T-cell (primary cell): ENCODE measurements at regions of chr9 and their contacts with region 1.

Region 1: GRCh38 chr9:120916588-120916987 is 10.0 kb downstream of the TRAF1 start:
- DNase-seq: no peak
- ATAC-seq: no peak
- H3K4me3 ChIP-seq: no peak overlapping the region
- H3K4me3 Mint-ChIP-seq: peak overlapping the region; percentile 29 to 72 (median 55)
- H3K27ac ChIP-seq: peak overlapping the region; percentile 52
- H3K27ac Mint-ChIP-seq: peak overlapping the region; percentile 88 to 93
- H3K4me1 ChIP-seq: peaks cover 25 to 88% of the 10 kb centered on the region in 2 experiments
- H3K4me1 Mint-ChIP-seq: peaks cover 85 to 90% (median 90%) of the 10 kb centered on the region in 3 donors
- H3K27me3 ChIP-seq: no peaks in the 10 kb centered on the region
- H3K27me3 Mint-ChIP-seq: no peaks in the 10 kb centered on the region

Region 2: DNA sequence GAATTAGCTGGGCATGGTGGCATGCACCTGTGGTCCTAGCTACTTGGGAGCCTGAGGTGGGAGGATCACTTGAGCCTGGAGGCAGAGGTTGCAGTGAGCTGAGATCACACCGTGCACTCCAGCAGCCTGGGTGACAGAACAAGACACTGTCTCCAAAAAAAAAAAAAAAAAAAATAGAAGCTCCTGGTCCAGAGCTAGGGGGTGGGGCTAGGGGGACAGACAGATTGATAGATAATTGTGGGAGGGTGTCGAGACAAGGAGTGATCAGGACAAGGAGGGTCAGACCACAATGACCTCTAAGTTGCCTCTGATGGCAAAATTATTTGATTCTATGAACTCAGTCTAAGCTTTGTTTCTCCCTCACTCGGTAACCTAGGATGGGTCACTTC is 33.0 kb before region 1 on chr9:
- CTCF ChIA-PET with region 1: interaction called, 3 read pairs
- POLR2A ChIA-PET with region 1: interaction called, 8 to 11 read pairs
- DNase-seq: no peak
- ATAC-seq: no peak
- H3K4me3 ChIP-seq: no peak overlapping the region
- H3K4me3 Mint-ChIP-seq: peak overlapping the region in 1 of 3 donors; percentile 50
- H3K27ac ChIP-seq: no peak overlapping the region
- H3K27ac Mint-ChIP-seq: peak overlapping the region; percentile 44 to 88
- H3K4me1 ChIP-seq: peaks cover 29 to 58% of the 10 kb centered on the region in 2 experiments
- H3K4me1 Mint-ChIP-seq: peaks cover 77 to 79% (median 77%) of the 10 kb centered on the region in 3 donors
- H3K27me3 ChIP-seq: no peaks in the 10 kb centered on the region
- H3K27me3 Mint-ChIP-seq: no peaks in the 10 kb centered on the region

Region 3: GRCh38 chr9:120904061-120904977 is 12.3 kb before region 1 on chr9:
- CTCF ChIA-PET with region 1: interaction called in 1 of 2 experiments, 4 read pairs
- POLR2A ChIA-PET with region 1: interaction called, 6 to 13 read pairs
- DNase-seq: peak; percentile 45 to 89 (median 78)
- ATAC-seq: peak; percentile 83 to 89 (median 86)
- H3K4me3 ChIP-seq: no peak overlapping the region
- H3K4me3 Mint-ChIP-seq: peak overlapping the region in 2 of 3 donors; percentile 56 to 76
- H3K27ac ChIP-seq: peak overlapping the region; percentile 94
- H3K27ac Mint-ChIP-seq: peak overlapping the region; percentile 97 to 99
- H3K4me1 ChIP-seq: peaks cover 38 to 88% of the 10 kb centered on the region in 2 experiments
- H3K4me1 Mint-ChIP-seq: peaks cover 87 to 90% (median 89%) of the 10 kb centered on the region in 3 donors
- H3K27me3 ChIP-seq: no peaks in the 10 kb centered on the region
- H3K27me3 Mint-ChIP-seq: no peaks in the 10 kb centered on the region